Spleen (tissue), 13 donors: ENCODE measurements at regions of chr3 and their contacts with region 1.

Region 1: DNA sequence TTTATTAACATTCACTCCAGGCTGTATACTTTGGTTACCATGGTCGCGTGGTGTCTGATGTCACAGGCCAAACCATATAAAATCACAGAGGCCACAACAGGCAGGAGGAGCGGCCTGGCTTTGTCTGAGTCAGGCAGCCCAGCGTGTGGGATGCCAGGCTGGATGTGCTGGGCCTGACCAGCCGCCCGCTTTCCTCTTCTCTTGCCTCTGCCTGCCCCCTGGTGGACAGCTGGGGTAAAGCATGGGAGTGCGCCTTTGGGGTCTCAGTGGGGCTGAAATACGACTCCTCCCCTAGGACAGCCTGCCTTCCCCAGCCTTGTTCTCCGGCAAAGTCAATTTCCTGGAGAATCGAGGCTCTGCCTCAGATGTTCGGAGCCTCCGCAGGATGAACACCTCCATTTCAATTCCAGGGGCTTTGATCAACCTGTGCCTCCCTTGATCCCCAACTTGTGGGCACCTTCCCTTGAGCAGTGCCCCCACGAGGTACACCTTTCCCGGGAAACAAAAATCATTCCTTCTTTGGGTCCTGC is 78.2 kb downstream of the CCNL1 start:
- DNase-seq: peak; percentile 95
- H3K4me3 ChIP-seq: no peak overlapping the region
- H3K27ac ChIP-seq: peak overlapping the region in 1 of 8 donors; percentile 6
- H3K4me1 ChIP-seq: peaks cover 0 to 15% (median 11%) of the 10 kb centered on the region in 6 donors
- H3K27me3 ChIP-seq: no peaks in the 10 kb centered on the region
- CTCF ChIP-seq: peak; percentile 90 to 97 (median 96)
- POLR2A ChIP-seq: no peak

Region 2: DNA sequence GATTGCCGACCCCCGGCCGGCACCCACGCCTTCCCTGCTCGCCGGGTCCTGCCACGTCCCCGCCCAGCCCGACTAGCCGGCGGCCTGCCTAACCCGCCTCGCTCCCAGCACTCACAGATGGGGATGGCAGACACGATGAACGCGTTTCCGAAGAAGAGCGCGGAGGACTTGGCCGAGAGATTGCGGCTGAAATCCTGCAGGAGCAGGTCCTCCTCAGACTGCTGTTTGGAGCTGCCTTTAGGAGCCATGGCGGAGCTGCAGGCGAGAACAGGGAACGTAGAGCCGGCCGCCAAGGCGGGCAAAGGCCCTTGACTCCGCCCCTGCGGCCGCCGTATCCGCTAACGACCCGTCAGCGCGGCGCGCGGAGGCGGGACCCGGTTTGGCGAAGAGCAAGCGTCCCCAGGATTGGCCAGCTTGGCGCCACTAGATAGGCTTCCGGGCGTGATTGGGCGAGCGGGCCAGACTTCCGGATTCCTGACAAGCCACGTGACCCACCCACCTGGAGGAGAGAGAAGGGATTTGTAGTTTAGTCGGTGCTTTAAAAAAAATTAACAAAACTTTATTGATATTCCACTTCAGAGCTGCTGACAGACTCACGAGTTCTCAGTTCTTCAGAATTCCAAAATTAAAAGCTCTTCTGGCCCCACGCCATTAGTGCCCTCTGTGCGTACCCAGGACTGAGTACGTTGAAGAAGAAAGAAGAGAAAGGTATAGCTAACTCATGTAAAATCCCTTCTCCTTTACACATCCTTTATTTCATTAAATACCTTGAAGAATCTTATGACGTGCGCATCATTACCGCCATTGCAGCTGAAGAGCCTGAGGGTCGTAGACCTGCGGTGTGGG is 526.7 kb before region 1 on chr3 and contains the start of gene SSR3:
- intact Hi-C with region 1: loop called (anchors 10 kb)
- DNase-seq: peak; percentile 99
- H3K4me3 ChIP-seq: peak within 1 kb of the TSS; percentile 73 to 93 (median 82)
- H3K27ac ChIP-seq: peak within 1 kb of the TSS; percentile 66 to 91 (median 86)
- H3K4me1 ChIP-seq: peaks cover 18 to 51% (median 38%) of the 10 kb centered on the region in 6 donors
- H3K27me3 ChIP-seq: no peaks in the 10 kb centered on the region
- CTCF ChIP-seq: peak; percentile 30 to 88 (median 68)
- POLR2A ChIP-seq: peak in 1 of 3 donors; percentile 67
- total RNA-seq, gene SSR3: 88.0 to 123 (median 107) TPM

Region 3: DNA sequence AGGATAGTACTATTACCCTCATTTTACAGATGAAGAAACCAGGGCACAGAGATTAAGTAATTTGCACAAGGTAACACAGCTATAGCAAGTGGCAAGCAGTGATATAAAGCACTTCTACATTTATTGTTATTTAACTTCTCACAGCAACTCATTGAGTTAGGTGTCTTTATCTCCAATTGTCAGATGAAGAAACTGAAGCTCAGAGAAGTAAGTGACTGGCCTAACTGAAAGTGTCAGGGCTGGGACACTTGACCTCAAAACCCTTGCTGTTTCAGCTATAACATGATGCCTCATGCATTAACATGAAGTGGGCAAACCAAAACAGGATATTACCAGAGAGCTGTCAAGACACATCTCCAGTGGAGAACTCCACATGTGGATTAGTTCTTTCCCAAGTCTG is 321.4 kb before region 1 on chr3:
- intact Hi-C with region 1: no loop called
- DNase-seq: no peak
- H3K4me3 ChIP-seq: no peak overlapping the region
- H3K27ac ChIP-seq: no peak overlapping the region
- H3K4me1 ChIP-seq: no peaks in the 10 kb centered on the region
- H3K27me3 ChIP-seq: no peaks in the 10 kb centered on the region
- CTCF ChIP-seq: no peak
- POLR2A ChIP-seq: no peak